Mammary epithelial cell (primary cell): ENCODE measurements at regions of chr16 and their contacts with region 1.

Region 1: DNA sequence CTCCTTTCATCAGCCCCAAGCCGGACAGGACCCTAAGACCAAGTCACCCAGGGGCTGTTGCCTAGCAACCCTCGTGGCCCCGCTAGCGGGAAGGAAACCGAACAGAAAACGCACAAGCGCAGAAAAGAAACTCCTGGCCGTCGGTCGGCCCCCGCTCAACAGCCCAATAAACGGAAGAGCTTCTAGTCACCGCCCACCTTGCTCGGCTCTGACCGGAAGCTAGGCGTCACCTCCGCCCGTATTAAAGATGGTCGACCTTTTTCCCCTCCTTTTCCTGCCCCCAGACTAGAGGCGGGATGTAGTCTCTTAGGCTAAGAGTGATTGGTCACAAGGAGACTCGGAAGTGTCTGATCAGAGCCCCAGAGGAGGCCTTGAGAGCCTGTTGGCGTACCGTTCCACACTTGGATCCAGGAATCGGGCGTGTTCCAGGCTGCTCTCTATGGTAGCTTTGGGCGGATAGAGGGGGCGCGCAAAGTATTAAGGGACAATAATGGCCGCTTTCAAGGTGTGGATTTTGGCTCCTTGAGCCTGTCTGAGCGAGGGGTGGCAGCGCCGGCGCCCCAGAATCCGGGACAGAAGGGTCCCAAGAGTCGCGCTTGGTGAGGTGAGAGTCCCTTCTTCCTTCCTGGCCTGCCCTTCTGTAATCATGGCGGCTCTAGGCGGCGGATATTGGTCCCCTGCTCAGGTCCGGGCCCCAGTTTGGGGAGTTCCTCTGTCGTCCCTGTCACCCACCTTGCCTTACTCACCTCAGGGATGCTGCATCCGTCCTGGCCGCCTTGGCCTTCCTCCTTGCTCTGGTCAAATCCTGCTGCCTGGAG is at the starts of genes DHX38 and TXNL4B:
- DNase-seq: peak; percentile 99
- H3K4me3 ChIP-seq: peak within 1 kb of the TSS; percentile 69 to 100 (median 98)
- H3K27ac ChIP-seq: peak within 1 kb of the TSS; percentile 85
- H3K4me1 ChIP-seq: peaks cover 20% of the 10 kb centered on the region
- H3K27me3 ChIP-seq: no peaks in the 10 kb centered on the region
- CTCF ChIP-seq: no peak
- total RNA-seq, gene DHX38: 32.3 to 62.9 TPM
- total RNA-seq, gene TXNL4B: 7.5 to 16.3 TPM

Region 2: DNA sequence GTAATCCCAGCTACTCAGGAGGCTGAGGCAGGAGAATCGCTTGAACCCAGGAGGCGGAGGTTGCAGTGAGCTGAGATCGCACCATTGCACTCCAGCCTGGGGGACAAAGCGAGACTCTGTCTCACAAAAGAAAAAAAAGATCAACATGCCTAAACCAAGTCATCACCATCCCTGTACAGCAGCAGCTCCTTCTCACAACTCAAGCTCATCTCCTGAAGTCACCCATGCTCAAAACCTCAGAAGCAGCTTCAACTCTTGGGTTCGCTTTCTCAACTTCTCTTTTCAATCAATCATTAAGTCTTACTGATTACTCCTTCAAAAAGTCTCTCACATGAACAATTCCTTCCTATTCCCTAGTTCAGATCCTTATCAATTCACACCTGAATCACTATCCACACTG is 400.5 kb before region 1 on chr16:
- CTCF ChIA-PET with region 1: no interaction called
- dilution Hi-C with region 1: no loop called
- in situ Hi-C with region 1: no loop called
- intact Hi-C with region 1: no loop called
- DNase-seq: no peak
- H3K4me3 ChIP-seq: no peak overlapping the region
- H3K27ac ChIP-seq: no peak overlapping the region
- H3K4me1 ChIP-seq: no peaks in the 10 kb centered on the region
- H3K27me3 ChIP-seq: no peaks in the 10 kb centered on the region
- CTCF ChIP-seq: no peak

Region 3: DNA sequence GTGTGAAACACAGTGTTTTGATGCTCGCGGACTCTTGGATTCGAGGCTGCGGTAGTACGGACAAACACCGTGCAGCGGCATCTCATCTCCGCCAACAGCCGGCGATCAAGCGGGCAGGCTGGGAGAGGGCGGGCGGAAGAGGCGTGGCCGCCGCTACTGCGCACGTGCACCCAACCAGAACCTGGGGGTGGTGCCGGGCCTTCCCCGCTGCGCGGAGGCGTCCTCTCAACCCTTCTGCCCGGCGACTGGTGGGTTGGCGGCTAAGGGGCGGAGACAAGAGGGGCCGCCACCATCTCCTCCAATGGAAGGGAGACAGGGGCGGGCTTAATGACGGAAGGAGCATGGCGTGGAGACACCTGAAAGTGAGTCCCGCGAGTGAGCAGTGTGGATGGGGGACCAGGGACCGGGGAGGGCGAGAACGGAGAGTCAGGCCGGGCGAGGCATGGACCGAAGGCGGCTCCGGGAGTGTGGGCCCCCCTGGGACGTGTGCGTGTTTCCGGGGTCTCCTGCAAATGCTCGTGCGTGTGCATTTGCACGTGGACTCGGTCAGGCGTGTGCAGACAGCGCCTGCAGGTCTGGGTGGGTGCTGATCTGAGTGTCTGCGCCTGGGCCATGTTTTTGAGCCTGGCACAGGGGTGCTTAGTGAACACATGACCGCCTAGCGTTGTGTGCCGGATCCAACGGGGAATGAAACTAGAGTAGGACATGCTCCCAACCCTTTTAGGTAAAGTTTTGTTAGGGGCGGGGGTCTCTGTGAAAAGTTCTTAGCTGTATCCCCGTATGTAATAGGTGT is 85.0 kb before region 1 on chr16 and contains the start of gene DHODH:
- CTCF ChIA-PET with region 1: no interaction called
- dilution Hi-C with region 1: no loop called
- in situ Hi-C with region 1: no loop called
- intact Hi-C with region 1: loop called (anchors 2 kb)
- DNase-seq: peak; percentile 97
- H3K4me3 ChIP-seq: peak within 1 kb of the TSS; percentile 82 to 100 (median 99)
- H3K27ac ChIP-seq: peak within 1 kb of the TSS; percentile 32
- H3K4me1 ChIP-seq: peaks cover 12% of the 10 kb centered on the region
- H3K27me3 ChIP-seq: no peaks in the 10 kb centered on the region
- CTCF ChIP-seq: peak in 1 of 2 donors; percentile 4
- total RNA-seq, gene DHODH: 2.0 to 5.9 TPM

Region 4: DNA sequence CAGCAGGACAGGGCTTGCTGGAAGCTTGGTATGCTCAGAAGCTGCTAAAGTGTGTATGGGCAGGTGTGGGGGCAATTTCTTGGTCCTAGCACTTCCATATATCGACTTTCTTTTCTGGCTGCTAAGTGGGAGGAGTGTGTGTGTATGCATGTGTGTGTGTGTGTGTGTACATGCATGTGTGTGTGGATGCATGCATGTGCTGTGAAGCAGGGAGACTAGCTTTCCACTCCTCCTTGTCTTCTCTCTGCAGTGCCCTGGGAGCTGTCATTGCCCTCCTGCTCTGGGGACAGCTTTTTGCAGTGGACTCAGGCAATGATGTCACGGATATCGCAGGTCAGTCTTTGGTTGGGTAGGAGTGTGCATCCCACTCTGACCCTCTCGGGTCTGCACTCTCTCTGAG is 37.7 kb before region 1 on chr16:
- CTCF ChIA-PET with region 1: no interaction called
- dilution Hi-C with region 1: loop called (anchors 5 kb)
- in situ Hi-C with region 1: no loop called
- intact Hi-C with region 1: no loop called
- DNase-seq: no peak
- H3K4me3 ChIP-seq: no peak overlapping the region
- H3K27ac ChIP-seq: no peak overlapping the region
- H3K4me1 ChIP-seq: no peaks in the 10 kb centered on the region
- H3K27me3 ChIP-seq: no peaks in the 10 kb centered on the region
- CTCF ChIP-seq: no peak

Region 5: DNA sequence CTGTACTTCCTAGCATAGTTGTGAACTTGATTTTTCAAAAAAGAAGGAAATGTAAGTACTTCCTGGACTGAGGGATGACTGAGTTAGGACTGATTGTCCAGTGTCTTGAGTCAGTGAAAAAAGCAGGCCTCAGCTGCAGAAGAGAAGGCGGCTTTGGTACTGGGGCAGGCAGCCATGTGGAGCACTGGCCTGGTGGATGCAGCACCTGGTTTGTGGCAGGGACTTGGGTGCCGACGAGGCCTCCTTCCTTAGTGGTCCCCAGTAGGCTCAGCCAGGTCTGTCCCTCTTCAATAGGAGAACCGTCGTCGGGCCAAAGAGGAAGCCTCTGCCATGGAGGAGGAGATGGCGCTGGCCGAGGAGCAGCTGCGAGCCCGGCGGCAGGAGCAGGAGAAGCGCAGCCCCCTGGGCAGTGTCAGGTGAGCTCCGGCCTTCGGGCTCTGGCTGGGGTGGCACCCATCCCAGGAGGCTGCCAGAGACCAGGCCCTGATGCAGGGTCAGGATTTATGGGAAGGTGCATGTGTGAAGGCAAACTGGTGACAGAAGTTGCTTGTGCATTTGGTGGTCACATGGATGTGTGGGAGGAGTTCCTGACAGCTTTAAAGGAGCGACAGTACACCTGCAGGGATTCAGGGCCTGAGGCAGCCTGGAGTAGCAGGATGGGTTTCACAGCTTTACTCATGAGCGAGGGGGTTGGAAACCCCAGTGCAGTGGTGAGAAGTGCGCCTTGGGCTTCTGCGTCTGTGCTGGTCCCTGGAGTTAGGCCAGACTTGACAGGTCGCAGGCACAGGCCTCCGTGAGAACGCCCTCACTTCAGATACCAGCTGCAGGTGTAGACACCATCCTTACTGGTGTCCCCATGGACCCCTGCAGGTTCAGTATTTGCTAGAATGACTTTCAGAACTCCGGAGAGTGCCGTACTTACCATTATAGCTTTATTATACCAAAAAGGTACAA is 17.3 kb after region 1 on chr16:
- CTCF ChIA-PET with region 1: no interaction called
- dilution Hi-C with region 1: no loop called
- in situ Hi-C with region 1: no loop called
- intact Hi-C with region 1: no loop called
- DNase-seq: no peak
- H3K4me3 ChIP-seq: no peak overlapping the region
- H3K27ac ChIP-seq: no peak overlapping the region
- H3K4me1 ChIP-seq: no peaks in the 10 kb centered on the region
- H3K27me3 ChIP-seq: no peaks in the 10 kb centered on the region
- CTCF ChIP-seq: no peak